GM13977 (cell line): ENCODE measurements at regions of chr6 and their contacts with region 1.

Region 1: GRCh38 chr6:159104163-159104925 is 59.6 kb upstream of the TAGAP start:
- DNase-seq: peak; percentile 79
- CTCF ChIP-seq: peak; percentile 97

Region 2: DNA sequence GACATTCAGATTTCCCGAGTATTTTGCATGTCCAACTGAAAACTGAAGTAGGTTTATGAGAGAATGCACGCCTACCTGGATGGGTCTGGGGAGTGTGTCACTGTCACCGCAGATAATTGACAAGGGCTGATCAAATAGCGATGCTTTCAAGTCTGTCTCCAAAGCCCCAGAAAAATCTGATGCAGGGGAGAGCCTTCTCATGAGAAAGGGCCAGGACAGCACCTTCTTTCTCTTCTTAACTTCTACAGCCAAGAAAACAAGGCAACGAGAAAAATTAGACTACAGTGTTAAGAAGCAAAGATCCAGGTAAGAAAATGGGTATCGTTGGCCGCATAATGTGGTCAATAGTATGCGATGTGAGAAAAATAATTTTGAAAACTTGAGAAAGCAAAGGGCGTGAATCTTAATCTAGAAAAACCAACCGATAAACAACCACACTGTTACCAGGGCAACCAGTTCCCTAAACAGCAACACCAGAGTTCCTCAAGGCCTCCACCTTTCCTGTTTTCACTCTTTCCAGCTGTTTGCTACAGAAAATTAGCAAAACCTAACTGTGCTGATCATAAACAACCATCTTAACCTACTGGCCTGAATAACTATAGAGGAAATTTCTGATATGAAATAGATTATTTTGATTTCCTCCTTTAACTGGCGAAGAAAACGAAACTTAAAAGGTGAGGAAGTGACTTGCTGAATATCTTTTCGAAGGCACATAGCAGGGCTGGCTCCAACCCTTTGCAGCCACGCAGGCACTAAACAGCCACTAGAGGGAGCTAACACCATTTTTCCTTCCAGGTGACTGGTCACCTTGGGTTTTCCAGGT is 62.1 kb before region 1 on chr6:
- in situ Hi-C with region 1: loop called (anchors 10 kb)
- DNase-seq: peak; percentile 63
- CTCF ChIP-seq: peak; percentile 98